GM18951 (cell line): ENCODE measurements at regions of chr12 and their contacts with region 1.

Region 1: DNA sequence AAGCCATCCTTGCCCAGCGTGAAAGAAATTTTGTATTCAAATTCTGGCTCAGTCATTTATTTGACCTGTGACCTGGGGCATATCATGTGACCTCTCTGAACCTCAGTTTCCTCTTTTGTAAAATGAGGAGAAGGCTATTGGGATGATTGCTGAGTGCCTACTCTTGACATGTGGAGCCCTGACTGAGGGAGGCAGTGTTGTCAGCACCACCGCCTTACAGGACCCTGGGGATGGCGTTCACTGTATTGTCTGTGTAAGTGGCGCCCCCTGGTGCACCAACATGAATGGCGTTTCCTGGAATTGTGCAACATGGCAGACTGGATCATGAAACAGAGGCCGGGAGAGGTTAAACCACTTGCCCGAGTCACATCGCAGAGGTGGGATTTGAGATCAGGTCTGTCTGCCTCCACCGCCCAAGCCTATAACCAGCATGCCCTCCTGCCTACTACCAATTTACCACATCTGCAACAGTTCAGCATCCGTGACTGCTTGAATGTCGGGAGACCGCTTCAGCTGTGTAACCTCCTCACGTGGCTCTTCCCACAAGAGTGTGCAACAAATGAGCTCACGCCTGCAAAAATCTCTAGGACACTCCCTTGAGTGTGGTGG is 20.1 kb upstream of the CCDC63 start:
- POLR2A ChIP-seq: no peak

Region 2: GRCh38 chr12:110449799-110450497 is 376.7 kb before region 1 on chr12 and contains the start of gene ARPC3:
- in situ Hi-C with region 1: loop called (anchors 25 kb)
- POLR2A ChIP-seq: peak; percentile 82

Region 3: GRCh38 chr12:110627500-110628195 is 199.0 kb before region 1 on chr12:
- in situ Hi-C with region 1: loop called (anchors 10 kb)
- POLR2A ChIP-seq: no peak

Region 4: DNA sequence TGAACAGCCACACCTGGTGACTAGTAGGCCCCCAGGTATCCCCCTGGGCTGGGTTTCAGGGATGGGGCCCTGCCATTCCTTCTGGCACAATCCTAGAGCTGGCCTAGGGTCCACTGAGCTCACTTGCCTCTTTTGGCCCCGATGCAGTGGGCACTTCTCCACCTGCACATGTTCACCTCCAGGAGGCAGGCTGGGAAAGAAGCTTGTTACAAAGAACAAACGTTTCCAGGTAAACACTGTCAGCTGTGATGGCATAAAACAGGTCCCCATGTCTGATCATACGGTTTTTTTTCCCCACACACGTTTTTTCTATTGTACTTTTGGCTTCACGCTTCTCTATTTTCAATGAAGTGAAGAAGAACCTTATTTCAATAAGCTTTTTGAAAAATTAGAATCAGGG is 121.9 kb before region 1 on chr12:
- in situ Hi-C with region 1: loop called (anchors 10 kb)
- POLR2A ChIP-seq: no peak